ENCODE measurements at regions of chr2 and their contacts with region 1.

Region 1: GRCh38 chr2:56183643-56184499 is at the start of gene CCDC85A:
- DNase-seq: peak; percentile 92
- H3K4me3 Mint-ChIP-seq: peak within 1 kb of the TSS; percentile 89
- H3K27ac Mint-ChIP-seq: no peak within 1 kb of the TSS
- H3K4me1 Mint-ChIP-seq: peaks cover 19% of the 10 kb centered on the region
- H3K27me3 Mint-ChIP-seq: no peaks in the 10 kb centered on the region
- CTCF ChIP-seq: peak; percentile 91
- total RNA-seq, gene CCDC85A: 2.6 and 3.0 TPM in 2 replicates

Region 2: DNA sequence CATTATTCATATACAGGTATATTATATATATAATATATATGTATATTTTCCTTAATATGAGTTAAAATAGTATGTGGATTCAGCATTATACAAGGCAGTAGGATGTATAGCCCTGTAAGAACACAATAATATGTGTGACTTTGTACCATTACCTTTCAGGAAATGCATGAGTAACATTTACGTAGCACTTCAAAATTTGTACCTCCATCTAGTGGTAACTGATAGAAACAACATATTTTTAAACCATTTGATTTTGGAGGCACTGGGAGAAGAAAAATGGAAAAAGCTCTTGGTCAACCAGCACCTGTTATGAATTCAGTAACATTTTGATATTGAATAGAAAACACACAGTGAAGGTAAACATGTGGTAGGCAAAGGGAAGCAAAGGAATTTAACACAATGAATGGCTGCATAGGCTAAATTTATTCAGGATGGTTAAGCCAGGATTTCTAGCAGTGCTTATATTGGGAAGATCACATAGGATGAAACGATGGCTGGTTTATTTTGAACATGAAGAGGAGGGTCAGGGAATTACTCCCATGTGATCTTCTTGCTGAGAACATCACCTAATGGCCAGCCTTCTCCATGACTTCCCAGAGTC is 565.4 kb after region 1 on chr2:
- CTCF ChIA-PET with region 1: interaction called, 6 read pairs
- intact Hi-C with region 1: loop called (anchors 1 kb)
- DNase-seq: no peak
- H3K4me3 Mint-ChIP-seq: no peak overlapping the region
- H3K27ac Mint-ChIP-seq: no peak overlapping the region
- H3K4me1 Mint-ChIP-seq: peaks cover 11% of the 10 kb centered on the region
- H3K27me3 Mint-ChIP-seq: no peaks in the 10 kb centered on the region
- CTCF ChIP-seq: no peak

Region 3: GRCh38 chr2:57044931-57045635 is 861.2 kb after region 1 on chr2:
- CTCF ChIA-PET with region 1: no interaction called
- intact Hi-C with region 1: no loop called
- DNase-seq: no peak
- H3K4me3 Mint-ChIP-seq: no peak overlapping the region
- H3K27ac Mint-ChIP-seq: no peak overlapping the region
- H3K4me1 Mint-ChIP-seq: no peaks in the 10 kb centered on the region
- H3K27me3 Mint-ChIP-seq: no peaks in the 10 kb centered on the region
- CTCF ChIP-seq: no peak

Region 4: DNA sequence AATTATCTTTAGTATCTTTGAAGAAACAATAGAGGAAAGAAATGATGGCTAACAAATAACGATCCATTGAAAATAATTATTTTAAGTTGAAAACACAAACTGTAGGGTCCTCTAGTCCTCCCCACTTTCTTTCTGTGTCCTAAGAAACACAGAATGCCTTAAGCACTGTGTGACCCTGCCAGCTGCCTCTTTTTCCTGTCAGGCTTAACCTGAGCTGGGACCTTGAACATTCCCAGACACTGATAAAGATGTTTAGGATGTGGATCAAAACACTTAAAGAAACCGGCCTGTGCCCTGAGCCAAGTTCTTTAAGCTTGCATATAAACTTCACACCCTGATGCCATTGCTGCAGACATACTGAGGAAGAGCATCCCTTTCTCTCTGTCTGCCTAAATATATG is 1107.3 kb after region 1 on chr2:
- CTCF ChIA-PET with region 1: no interaction called
- intact Hi-C with region 1: loop called (anchors 5 kb)
- DNase-seq: no peak
- H3K4me3 Mint-ChIP-seq: no peak overlapping the region
- H3K27ac Mint-ChIP-seq: no peak overlapping the region
- H3K4me1 Mint-ChIP-seq: no peaks in the 10 kb centered on the region
- H3K27me3 Mint-ChIP-seq: no peaks in the 10 kb centered on the region
- CTCF ChIP-seq: no peak

Region 5: DNA sequence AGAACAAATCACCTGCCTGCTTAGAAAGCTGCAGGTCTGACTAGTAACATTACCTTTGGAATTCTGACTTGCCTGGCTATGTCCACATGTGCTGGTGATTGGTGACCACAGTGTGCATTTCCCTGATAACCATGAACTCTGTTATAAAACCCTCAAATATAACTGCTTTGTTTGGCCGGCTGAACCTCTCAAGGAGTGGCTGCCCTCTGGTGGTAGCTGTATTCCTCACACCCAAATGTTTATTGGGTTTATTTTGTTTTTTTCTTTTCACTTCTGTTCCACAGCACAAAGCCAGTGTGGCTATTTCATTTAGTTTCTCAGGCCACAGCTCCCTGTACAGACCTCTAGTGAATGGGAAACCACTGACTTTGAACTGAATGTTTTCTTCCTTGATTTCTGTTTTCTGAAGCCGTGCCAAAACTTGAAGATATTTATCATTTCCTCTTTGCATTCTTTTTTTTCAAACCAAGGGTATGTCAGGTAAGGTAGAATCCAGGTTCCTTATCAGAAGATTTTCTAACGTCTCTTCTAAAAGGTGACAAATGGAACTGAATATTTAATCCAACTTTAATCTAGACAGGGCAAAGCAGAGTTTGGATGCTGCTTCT is 1313.7 kb after region 1 on chr2:
- CTCF ChIA-PET with region 1: interaction called, 8 read pairs
- intact Hi-C with region 1: loop called (anchors 5 kb)
- DNase-seq: peak; percentile 64
- H3K4me3 Mint-ChIP-seq: no peak overlapping the region
- H3K27ac Mint-ChIP-seq: no peak overlapping the region
- H3K4me1 Mint-ChIP-seq: no peaks in the 10 kb centered on the region
- H3K27me3 Mint-ChIP-seq: no peaks in the 10 kb centered on the region
- CTCF ChIP-seq: peak; percentile 59